ENCODE measurements at regions of chr9 and their contacts with region 1.

Region 1: DNA sequence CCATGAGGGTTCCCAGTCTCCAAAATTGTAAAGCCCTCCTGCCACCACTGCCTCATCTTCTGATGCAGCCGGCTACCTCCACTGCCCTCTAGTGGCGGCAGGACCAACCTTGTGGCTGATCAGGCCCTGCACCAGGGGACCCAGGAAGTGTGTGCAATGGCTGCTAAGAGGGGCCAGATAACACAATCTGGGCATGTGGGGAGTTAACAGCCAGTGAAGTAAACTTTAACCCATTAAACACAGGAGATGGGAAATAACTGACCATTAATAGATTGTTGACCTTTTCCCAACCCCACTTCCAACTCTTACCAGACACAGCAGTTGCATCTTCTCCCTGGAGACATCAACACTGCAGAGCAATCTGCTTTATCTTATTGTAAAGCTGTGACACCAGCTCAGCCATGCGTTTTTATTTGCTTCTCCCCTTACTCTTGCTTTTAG is 63.3 kb downstream of the FREM1 start:
- DNase-seq: peak in 7 of 9 donors; percentile 18 to 54 (median 30)
- ATAC-seq: peak; percentile 66
- H3K4me3 ChIP-seq: no peak overlapping the region
- H3K4me3 Mint-ChIP-seq: no peak overlapping the region
- H3K27ac ChIP-seq: no peak overlapping the region
- H3K27ac Mint-ChIP-seq: no peak overlapping the region
- H3K4me1 ChIP-seq: no peaks in the 10 kb centered on the region
- H3K4me1 Mint-ChIP-seq: no peaks in the 10 kb centered on the region
- H3K27me3 ChIP-seq: peaks cover 0 to 4% of the 10 kb centered on the region in 2 donors
- H3K27me3 Mint-ChIP-seq: peaks cover 2 to 21% (median 13%) of the 10 kb centered on the region in 5 donors

Region 2: DNA sequence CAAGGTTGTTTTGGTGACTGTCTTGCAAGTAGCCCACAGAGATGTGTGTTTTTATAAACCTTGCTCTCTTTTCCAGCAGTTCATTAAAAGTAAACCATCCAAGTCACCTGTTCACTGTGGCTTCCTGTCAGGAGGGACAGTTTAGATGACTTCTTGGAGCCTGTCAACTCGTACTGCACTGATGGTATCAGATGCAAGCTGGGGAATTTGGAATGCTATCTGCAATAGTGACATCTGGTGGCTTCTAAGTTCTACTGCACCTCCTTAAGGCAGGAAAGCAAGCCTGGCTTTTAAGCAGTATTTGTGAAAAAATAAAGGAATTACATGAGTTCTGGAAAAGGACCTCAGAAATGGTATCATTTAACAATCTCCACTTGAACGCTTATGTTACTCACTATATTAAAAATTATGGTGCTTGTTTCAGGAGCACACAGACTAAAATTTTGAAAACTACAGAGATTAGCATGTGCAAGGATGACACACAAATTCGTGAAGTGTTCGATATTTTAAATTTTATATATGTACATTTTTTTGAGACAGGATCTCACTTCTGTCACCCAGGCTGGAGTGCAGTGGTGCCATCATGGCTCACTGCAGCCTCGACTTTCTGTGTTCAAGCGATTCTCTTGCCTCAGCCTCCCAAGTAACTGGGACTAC is 296.1 kb after region 1 on chr9:
- CTCF ChIA-PET with region 1: no interaction called
- POLR2A ChIA-PET with region 1: no interaction called
- intact Hi-C with region 1: loop called in 1 of 2 experiments (anchors 2 kb)
- DNase-seq: peak in 7 of 9 donors; percentile 7 to 45 (median 22)
- ATAC-seq: peak; percentile 83
- H3K4me3 ChIP-seq: no peak overlapping the region
- H3K4me3 Mint-ChIP-seq: no peak overlapping the region
- H3K27ac ChIP-seq: no peak overlapping the region
- H3K27ac Mint-ChIP-seq: no peak overlapping the region
- H3K4me1 ChIP-seq: no peaks in the 10 kb centered on the region
- H3K4me1 Mint-ChIP-seq: peaks cover 0 to 9% (median 3%) of the 10 kb centered on the region in 7 donors
- H3K27me3 ChIP-seq: no peaks in the 10 kb centered on the region
- H3K27me3 Mint-ChIP-seq: peaks cover 0 to 14% (median 5%) of the 10 kb centered on the region in 5 donors

Region 3: GRCh38 chr9:15349892-15350778 is 503.2 kb after region 1 on chr9:
- CTCF ChIA-PET with region 1: no interaction called
- POLR2A ChIA-PET with region 1: no interaction called
- intact Hi-C with region 1: no loop called
- DNase-seq: no peak
- ATAC-seq: no peak
- H3K4me3 ChIP-seq: no peak overlapping the region
- H3K4me3 Mint-ChIP-seq: no peak overlapping the region
- H3K27ac ChIP-seq: no peak overlapping the region
- H3K27ac Mint-ChIP-seq: peak overlapping the region in 1 of 9 donors; percentile 51
- H3K4me1 ChIP-seq: peaks cover 0 to 20% of the 10 kb centered on the region in 2 donors
- H3K4me1 Mint-ChIP-seq: peaks cover 11 to 40% (median 34%) of the 10 kb centered on the region in 7 donors
- H3K27me3 ChIP-seq: no peaks in the 10 kb centered on the region
- H3K27me3 Mint-ChIP-seq: no peaks in the 10 kb centered on the region

Measured in naive thymus-derived CD4-positive, alpha-beta T cell (primary cell).